ENCODE measurements at regions of chr2 and their contacts with region 1.

Region 1: GRCh38 chr2:190791347-190791975 is 89.2 kb upstream of the GLS start:
- DNase-seq: peak in 1 of 2 donors; percentile 76
- ATAC-seq: peak; percentile 81
- H3K4me3 ChIP-seq: no peak overlapping the region
- H3K27ac ChIP-seq: no peak overlapping the region
- H3K4me1 ChIP-seq: peaks cover 0 to 1% of the 10 kb centered on the region in 2 donors
- H3K27me3 ChIP-seq: no peaks in the 10 kb centered on the region

Region 2: DNA sequence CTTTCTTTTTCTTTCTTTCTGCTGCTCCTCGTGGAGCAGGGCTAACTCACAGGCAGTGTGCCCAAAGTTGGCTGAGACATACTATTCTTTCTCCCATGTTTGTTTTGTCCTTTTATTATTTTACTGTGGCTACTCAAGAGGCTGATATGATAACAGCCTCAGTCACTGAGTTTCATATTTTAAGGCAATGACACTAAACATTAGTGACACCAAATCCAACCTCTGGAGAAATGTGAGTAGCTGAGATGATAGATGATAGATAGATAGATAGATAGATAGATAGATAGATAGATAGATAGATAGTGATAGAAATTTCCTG is 43.4 kb after region 1 on chr2:
- intact Hi-C with region 1: loop called in 1 of 2 experiments (anchors 5 kb)
- DNase-seq: no peak
- ATAC-seq: no peak
- H3K4me3 ChIP-seq: no peak overlapping the region
- H3K27ac ChIP-seq: no peak overlapping the region
- H3K4me1 ChIP-seq: peaks cover 2 to 10% of the 10 kb centered on the region in 2 donors
- H3K27me3 ChIP-seq: no peaks in the 10 kb centered on the region

Region 3: GRCh38 chr2:190853531-190854383 is 62.3 kb after region 1 on chr2:
- intact Hi-C with region 1: no loop called
- DNase-seq: no peak
- ATAC-seq: no peak
- H3K4me3 ChIP-seq: no peak overlapping the region
- H3K27ac ChIP-seq: no peak overlapping the region
- H3K4me1 ChIP-seq: peaks cover 0 to 10% of the 10 kb centered on the region in 2 donors
- H3K27me3 ChIP-seq: no peaks in the 10 kb centered on the region

Region 4: DNA sequence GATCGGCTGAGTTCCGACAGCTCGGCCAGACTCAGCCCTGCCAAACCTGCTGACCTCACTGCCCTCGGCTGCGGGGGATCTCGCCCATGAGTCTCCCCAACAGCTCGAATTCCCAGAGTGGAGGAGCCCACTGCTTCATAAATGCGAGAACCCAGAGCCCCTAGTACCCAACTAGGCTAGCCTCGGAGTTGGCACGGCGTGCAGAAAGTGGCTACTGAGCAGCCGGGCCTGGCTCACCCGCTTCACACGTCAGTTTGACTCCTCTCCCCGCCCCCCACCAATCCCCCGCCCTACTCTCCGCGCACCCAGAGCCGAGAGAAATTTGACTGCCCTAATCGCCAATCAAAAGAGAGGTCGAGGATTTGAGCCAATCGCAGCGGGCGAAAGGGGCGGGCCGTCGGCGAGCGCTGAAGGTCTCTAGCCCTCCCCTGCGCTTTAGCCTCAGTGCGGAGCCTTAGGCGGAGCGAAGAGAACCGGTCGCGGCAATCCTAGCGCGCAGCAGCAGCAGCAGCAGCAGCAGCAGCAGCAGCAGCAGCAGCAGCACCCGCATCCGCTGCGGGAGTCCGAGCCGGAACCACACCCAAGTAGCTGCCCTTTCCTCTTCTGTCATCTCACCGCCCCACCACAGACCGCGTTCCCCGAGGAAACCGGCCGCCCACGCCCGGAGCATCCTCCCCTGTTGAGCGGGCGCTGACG is 89.1 kb after region 1 on chr2 and contains the start of gene GLS:
- intact Hi-C with region 1: loop called in 1 of 2 experiments (anchors 10 kb)
- DNase-seq: peak; percentile 97 to 98
- ATAC-seq: peak; percentile 96
- H3K4me3 ChIP-seq: peak within 1 kb of the TSS; percentile 95 to 97
- H3K27ac ChIP-seq: peak within 1 kb of the TSS; percentile 94 to 96
- H3K4me1 ChIP-seq: peaks cover 0 to 3% of the 10 kb centered on the region in 2 donors
- H3K27me3 ChIP-seq: no peaks in the 10 kb centered on the region
- total RNA-seq, gene GLS: 344 to 425 TPM

Region 5: GRCh38 chr2:191020221-191020741 is 228.8 kb after region 1 on chr2:
- intact Hi-C with region 1: no loop called
- DNase-seq: peak; percentile 95 to 97
- ATAC-seq: peak; percentile 99
- H3K4me3 ChIP-seq: peak overlapping the region; percentile 48 to 67
- H3K27ac ChIP-seq: peak overlapping the region; percentile 83 to 97
- H3K4me1 ChIP-seq: no peaks in the 10 kb centered on the region
- H3K27me3 ChIP-seq: no peaks in the 10 kb centered on the region